Endothelial cell of umbilical vein (primary cell): ENCODE measurements at regions of chr6 and their contacts with region 1.

Region 1: GRCh38 chr6:6696867-6697531 is 108.5 kb downstream of the LY86 start:
- DNase-seq: peak; percentile 91
- H3K4me3 ChIP-seq: no peak overlapping the region
- H3K27ac ChIP-seq: peak overlapping the region; percentile 20
- H3K4me1 ChIP-seq: peaks cover 12% of the 10 kb centered on the region
- H3K27me3 ChIP-seq: no peaks in the 10 kb centered on the region
- CTCF ChIP-seq: peak; percentile 90 to 96
- POLR2A ChIP-seq: no peak

Region 2: GRCh38 chr6:6686748-6687601 is 10.0 kb before region 1 on chr6:
- CTCF ChIA-PET with region 1: interaction called, 45 read pairs
- POLR2A ChIA-PET with region 1: no interaction called
- dilution Hi-C with region 1: no loop called
- intact Hi-C with region 1: loop called (anchors 1 kb)
- DNase-seq: peak; percentile 96
- H3K4me3 ChIP-seq: no peak overlapping the region
- H3K27ac ChIP-seq: peak overlapping the region; percentile 36
- H3K4me1 ChIP-seq: peaks cover 43% of the 10 kb centered on the region
- H3K27me3 ChIP-seq: peaks cover 8 to 10% of the 10 kb centered on the region in 2 experiments
- CTCF ChIP-seq: no peak
- POLR2A ChIP-seq: no peak

Region 3: GRCh38 chr6:6712258-6712999 is 15.4 kb after region 1 on chr6:
- CTCF ChIA-PET with region 1: interaction called, 34 read pairs
- POLR2A ChIA-PET with region 1: no interaction called
- dilution Hi-C with region 1: no loop called
- intact Hi-C with region 1: no loop called
- DNase-seq: no peak
- H3K4me3 ChIP-seq: no peak overlapping the region
- H3K27ac ChIP-seq: no peak overlapping the region
- H3K4me1 ChIP-seq: no peaks in the 10 kb centered on the region
- H3K27me3 ChIP-seq: peaks cover 4 to 5% of the 10 kb centered on the region in 2 experiments
- CTCF ChIP-seq: no peak
- POLR2A ChIP-seq: no peak

Region 4: GRCh38 chr6:6724539-6725467 is 27.8 kb after region 1 on chr6:
- CTCF ChIA-PET with region 1: interaction called, 51 read pairs
- POLR2A ChIA-PET with region 1: no interaction called
- dilution Hi-C with region 1: no loop called
- intact Hi-C with region 1: loop called (anchors 2 kb)
- DNase-seq: peak; percentile 83
- H3K4me3 ChIP-seq: peak overlapping the region in 1 of 3 experiments; percentile 16
- H3K27ac ChIP-seq: peak overlapping the region; percentile 59
- H3K4me1 ChIP-seq: peaks cover 19% of the 10 kb centered on the region
- H3K27me3 ChIP-seq: peaks cover 0 to 2% of the 10 kb centered on the region in 2 experiments
- CTCF ChIP-seq: peak; percentile 57 to 60
- POLR2A ChIP-seq: no peak

Region 5: GRCh38 chr6:6758915-6759654 is 62.1 kb after region 1 on chr6:
- CTCF ChIA-PET with region 1: interaction called, 13 read pairs
- POLR2A ChIA-PET with region 1: no interaction called
- dilution Hi-C with region 1: no loop called
- intact Hi-C with region 1: loop called (anchors 1 kb)
- DNase-seq: peak; percentile 64
- H3K4me3 ChIP-seq: no peak overlapping the region
- H3K27ac ChIP-seq: no peak overlapping the region
- H3K4me1 ChIP-seq: no peaks in the 10 kb centered on the region
- H3K27me3 ChIP-seq: peaks cover 0 to 4% of the 10 kb centered on the region in 2 experiments
- CTCF ChIP-seq: peak; percentile 40 to 45
- POLR2A ChIP-seq: no peak

Region 6: DNA sequence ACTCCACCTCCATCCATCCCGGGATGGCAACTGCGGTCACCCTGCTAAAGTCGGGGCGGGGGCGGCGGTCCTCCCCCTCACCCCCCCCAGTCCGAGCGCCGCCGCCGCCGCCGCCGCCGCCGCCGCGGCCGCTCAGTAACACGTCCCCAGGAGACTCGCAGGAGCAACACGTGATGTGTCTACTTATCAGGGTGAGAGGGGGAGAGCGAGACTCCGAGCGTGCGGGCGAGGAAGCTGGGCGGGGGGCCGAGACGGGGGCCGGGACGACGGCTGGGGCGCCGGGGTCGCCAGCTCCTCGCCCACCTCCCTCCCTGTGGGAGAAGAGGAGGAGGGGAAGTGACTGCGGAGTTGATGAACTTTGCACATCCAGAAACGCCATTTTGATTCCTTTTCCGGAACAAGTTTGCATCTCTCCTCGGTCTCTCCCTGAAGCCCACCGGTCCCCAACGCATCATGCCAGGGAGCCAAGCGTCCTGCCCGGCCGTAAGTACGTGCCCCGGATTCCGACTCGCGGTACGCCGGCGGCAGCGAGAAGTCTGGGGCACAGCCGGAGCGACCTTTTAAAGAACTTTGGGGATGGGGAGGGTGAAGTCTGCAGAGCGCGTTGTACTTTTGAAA is 410.7 kb after region 1 on chr6 and contains the start of gene RREB1:
- CTCF ChIA-PET with region 1: interaction called, 7 read pairs
- POLR2A ChIA-PET with region 1: no interaction called
- dilution Hi-C with region 1: no loop called
- intact Hi-C with region 1: loop called (anchors 1 kb)
- DNase-seq: peak; percentile 68
- H3K4me3 ChIP-seq: peak within 1 kb of the TSS; percentile 87 to 99 (median 93)
- H3K27ac ChIP-seq: peak within 1 kb of the TSS; percentile 71
- H3K4me1 ChIP-seq: peaks cover 13% of the 10 kb centered on the region
- H3K27me3 ChIP-seq: no peaks in the 10 kb centered on the region
- CTCF ChIP-seq: no peak
- POLR2A ChIP-seq: no peak
- total RNA-seq, gene RREB1: 30.8 and 33.0 TPM in 2 replicates